BJ (cell line): ENCODE measurements at regions of chr20 and their contacts with region 1.

Region 1: DNA sequence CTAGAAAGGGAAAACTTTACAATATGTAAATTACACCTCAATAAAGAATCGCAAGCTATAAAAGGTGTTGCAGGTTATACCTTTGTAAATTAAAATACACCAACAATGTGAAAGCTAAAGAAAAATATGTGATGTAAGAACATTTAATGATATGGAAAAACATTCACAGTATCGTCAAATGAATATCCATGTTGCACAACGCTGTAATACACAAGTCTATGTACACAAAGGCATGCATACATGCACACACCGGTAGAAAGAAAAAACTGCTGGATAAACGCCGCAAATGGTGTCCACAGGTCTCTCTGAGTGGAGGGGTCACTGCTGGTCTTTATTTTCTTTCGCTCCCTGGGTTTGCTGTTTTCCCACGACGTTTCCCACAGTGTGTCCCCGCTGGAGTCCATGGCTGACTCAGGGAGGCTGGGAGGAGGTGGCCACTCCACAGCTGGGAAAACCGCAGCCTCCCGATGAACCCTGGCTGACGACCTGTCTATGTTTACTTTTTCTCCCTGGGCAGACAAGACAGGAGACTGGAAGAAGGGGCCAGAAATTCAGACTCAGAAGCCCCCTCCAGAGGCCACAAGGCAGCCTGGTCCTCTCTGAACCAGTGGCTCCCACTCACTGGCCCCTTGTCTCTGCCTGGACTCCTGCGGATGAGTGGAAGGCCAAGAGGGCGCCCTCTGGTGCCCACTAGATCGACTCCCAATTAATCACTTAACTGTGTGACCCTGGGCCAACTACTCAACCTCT is 12.9 kb upstream of the BPI start:
- DNase-seq: peak; percentile 57
- H3K4me3 ChIP-seq: no peak overlapping the region
- H3K27me3 ChIP-seq: no peaks in the 10 kb centered on the region
- CTCF ChIP-seq: peak; percentile 53

Region 2: GRCh38 chr20:38304845-38305447 is 13.9 kb after region 1 on chr20:
- CTCF ChIA-PET with region 1: interaction called, 16 read pairs
- POLR2A ChIA-PET with region 1: no interaction called
- DNase-seq: no peak
- H3K4me3 ChIP-seq: no peak overlapping the region
- H3K27me3 ChIP-seq: peaks cover 2% of the 10 kb centered on the region; the same call in 1 of the 2 replicates
- CTCF ChIP-seq: peak; percentile 81